ENCODE measurements at regions of chr7 and their contacts with region 1.

Region 1: GRCh38 chr7:51162724-51163329 is 153.8 kb downstream of the COBL start:
- DNase-seq: peak; percentile 64
- ATAC-seq: peak; percentile 98
- H3K4me3 ChIP-seq: no peak overlapping the region
- H3K27ac ChIP-seq: no peak overlapping the region
- H3K4me1 ChIP-seq: no peaks in the 10 kb centered on the region
- H3K27me3 ChIP-seq: no peaks in the 10 kb centered on the region
- CTCF ChIP-seq: peak; percentile 89
- EP300 ChIP-seq: no peak
- POLR2A ChIP-seq: no peak
- RAD21 ChIP-seq: peak; percentile 28; the same call in 1 of the 2 replicates

Region 2: GRCh38 chr7:50119815-50120637 is 1042.8 kb before region 1 on chr7:
- CTCF ChIA-PET with region 1: no interaction called
- POLR2A ChIA-PET with region 1: no interaction called
- in situ Hi-C with region 1: loop called (anchors 25 kb)
- intact Hi-C with region 1: no loop called
- DNase-seq: peak; percentile 21
- ATAC-seq: peak; percentile 97
- H3K4me3 ChIP-seq: no peak overlapping the region
- H3K27ac ChIP-seq: no peak overlapping the region
- H3K4me1 ChIP-seq: no peaks in the 10 kb centered on the region
- H3K27me3 ChIP-seq: no peaks in the 10 kb centered on the region
- CTCF ChIP-seq: peak; percentile 61
- EP300 ChIP-seq: no peak
- POLR2A ChIP-seq: no peak
- RAD21 ChIP-seq: no peak

Region 3: DNA sequence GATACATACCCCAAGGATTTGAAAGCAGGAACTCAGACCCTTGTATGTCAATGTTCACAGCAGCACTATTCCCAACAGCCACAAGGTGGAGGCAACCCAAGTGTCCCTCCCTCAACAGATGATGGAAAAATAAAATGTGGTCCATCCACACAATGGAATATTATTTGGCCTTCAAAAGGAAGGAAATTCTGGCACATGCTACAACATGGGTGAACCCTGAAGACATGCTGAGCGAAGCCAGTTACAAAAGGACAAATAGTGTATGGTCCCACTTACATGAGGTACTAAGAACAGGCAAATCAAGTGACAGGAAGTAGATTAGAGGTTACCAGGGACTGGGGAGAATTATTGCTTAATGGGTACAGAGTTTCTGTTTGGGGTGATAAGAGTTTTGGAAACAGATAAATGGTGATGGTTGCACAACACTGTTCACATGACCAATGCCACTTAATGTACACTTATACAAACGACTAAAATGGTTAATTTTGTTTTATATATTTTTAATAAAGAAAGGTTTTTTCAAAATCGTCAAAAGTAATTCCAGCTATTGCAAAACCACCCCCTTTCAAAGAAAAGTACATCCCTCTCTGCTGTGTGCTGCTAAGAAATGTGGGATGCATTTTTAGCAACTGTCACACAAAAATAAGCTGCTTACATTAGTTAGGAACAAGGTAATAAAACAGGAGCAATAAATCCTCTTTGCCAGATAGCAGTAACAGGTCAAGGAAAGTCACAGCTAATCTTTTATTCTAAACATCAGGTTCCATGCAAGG is 465.8 kb before region 1 on chr7:
- CTCF ChIA-PET with region 1: no interaction called
- POLR2A ChIA-PET with region 1: no interaction called
- in situ Hi-C with region 1: no loop called
- intact Hi-C with region 1: loop called (anchors 1 kb)
- DNase-seq: peak; percentile 32
- ATAC-seq: peak; percentile 77
- H3K4me3 ChIP-seq: no peak overlapping the region
- H3K27ac ChIP-seq: no peak overlapping the region
- H3K4me1 ChIP-seq: 0 out of 2 replicates have a peak, but pooled peaks cover 11% of the 10 kb centered on the region
- H3K27me3 ChIP-seq: no peaks in the 10 kb centered on the region
- CTCF ChIP-seq: peak; percentile 55
- EP300 ChIP-seq: no peak; a peak in 1 of 4 replicates
- POLR2A ChIP-seq: no peak
- RAD21 ChIP-seq: peak; percentile 47; the same call in 1 of the 2 replicates

Region 4: GRCh38 chr7:51067757-51068156 is 95.1 kb before region 1 on chr7:
- CTCF ChIA-PET with region 1: no interaction called
- POLR2A ChIA-PET with region 1: no interaction called
- in situ Hi-C with region 1: no loop called
- intact Hi-C with region 1: loop called (anchors 5 kb)
- DNase-seq: peak; percentile 53
- ATAC-seq: peak; percentile 89
- H3K4me3 ChIP-seq: no peak overlapping the region
- H3K27ac ChIP-seq: no peak overlapping the region
- H3K4me1 ChIP-seq: peaks cover 12% of the 10 kb centered on the region
- H3K27me3 ChIP-seq: no peaks in the 10 kb centered on the region
- CTCF ChIP-seq: peak; percentile 68
- EP300 ChIP-seq: no peak
- POLR2A ChIP-seq: no peak
- RAD21 ChIP-seq: peak; percentile 43; the same call in 1 of the 2 replicates

Region 5: GRCh38 chr7:51229106-51229537 is 66.3 kb after region 1 on chr7:
- CTCF ChIA-PET with region 1: no interaction called
- POLR2A ChIA-PET with region 1: no interaction called
- in situ Hi-C with region 1: no loop called
- intact Hi-C with region 1: no loop called
- DNase-seq: no peak
- ATAC-seq: no peak
- H3K4me3 ChIP-seq: no peak overlapping the region
- H3K27ac ChIP-seq: no peak overlapping the region
- H3K4me1 ChIP-seq: no peaks in the 10 kb centered on the region
- H3K27me3 ChIP-seq: no peaks in the 10 kb centered on the region
- CTCF ChIP-seq: no peak
- EP300 ChIP-seq: no peak
- POLR2A ChIP-seq: no peak
- RAD21 ChIP-seq: no peak

Region 6: DNA sequence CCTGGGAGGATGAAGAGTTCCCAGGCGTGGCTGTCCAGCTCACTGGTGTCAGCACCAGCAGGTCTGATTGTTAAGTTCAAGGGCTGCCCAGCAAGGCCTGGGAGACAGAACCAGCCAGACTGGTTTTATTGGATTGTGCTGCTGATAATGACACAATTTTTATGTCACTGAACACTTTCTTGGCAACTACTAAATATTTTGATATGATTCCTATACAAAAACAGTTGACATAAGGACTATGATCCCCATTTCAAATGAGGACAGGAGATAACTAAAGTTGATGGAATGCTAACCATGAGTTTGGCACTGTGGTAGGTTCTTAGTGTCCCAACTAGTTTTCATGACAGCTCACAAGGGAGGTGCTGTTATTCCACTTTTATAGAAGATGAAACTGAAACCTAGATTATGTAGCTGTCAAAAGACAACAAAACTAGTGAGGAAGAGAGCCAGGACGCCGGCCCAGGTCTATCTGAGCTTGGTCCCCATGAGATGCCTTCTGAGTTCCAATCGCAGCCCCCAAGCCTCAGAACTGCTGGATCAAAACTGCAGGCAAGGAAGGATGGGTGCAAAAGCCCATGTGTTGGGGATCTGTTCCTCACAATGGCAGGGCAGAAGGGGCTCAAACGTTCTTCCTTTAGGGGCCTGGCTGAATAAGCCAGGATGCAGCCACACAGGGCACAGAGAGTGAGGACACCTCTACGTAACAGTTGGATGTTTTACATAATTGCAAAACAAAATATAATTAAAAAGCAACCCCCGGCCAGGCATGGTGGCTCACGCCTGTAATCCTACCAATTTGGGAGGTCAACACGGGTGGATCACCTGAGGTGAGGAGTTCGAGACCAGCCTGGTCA is 101.0 kb after region 1 on chr7:
- CTCF ChIA-PET with region 1: no interaction called
- POLR2A ChIA-PET with region 1: no interaction called
- in situ Hi-C with region 1: no loop called
- intact Hi-C with region 1: no loop called
- DNase-seq: no peak
- ATAC-seq: no peak
- H3K4me3 ChIP-seq: no peak overlapping the region
- H3K27ac ChIP-seq: no peak overlapping the region
- H3K4me1 ChIP-seq: peaks cover 39% of the 10 kb centered on the region
- H3K27me3 ChIP-seq: no peaks in the 10 kb centered on the region
- CTCF ChIP-seq: no peak
- EP300 ChIP-seq: no peak
- POLR2A ChIP-seq: no peak
- RAD21 ChIP-seq: no peak

Region 7: GRCh38 chr7:51430480-51431086 is 267.8 kb after region 1 on chr7:
- CTCF ChIA-PET with region 1: interaction called, 3 read pairs
- POLR2A ChIA-PET with region 1: no interaction called
- in situ Hi-C with region 1: no loop called
- intact Hi-C with region 1: loop called (anchors 1 kb)
- DNase-seq: peak; percentile 43
- ATAC-seq: peak; percentile 63
- H3K4me3 ChIP-seq: no peak overlapping the region
- H3K27ac ChIP-seq: no peak overlapping the region
- H3K4me1 ChIP-seq: no peaks in the 10 kb centered on the region
- H3K27me3 ChIP-seq: peaks cover 0 to 3% of the 10 kb centered on the region in 2 experiments; a peak in 1 of 5 replicates
- CTCF ChIP-seq: peak; percentile 86
- EP300 ChIP-seq: no peak
- POLR2A ChIP-seq: no peak
- RAD21 ChIP-seq: peak; percentile 74; the same call in 1 of the 2 replicates